Activated CD4-positive, alpha-beta memory T cell treated with anti-CD3 and anti-CD28 coated beads, Interleukin-2, amount 10 ng/mL, durations not matched to agents 7 days and 5 days (primary cell): ENCODE measurements at regions of chr22 and their contacts with region 1.

Region 1: DNA sequence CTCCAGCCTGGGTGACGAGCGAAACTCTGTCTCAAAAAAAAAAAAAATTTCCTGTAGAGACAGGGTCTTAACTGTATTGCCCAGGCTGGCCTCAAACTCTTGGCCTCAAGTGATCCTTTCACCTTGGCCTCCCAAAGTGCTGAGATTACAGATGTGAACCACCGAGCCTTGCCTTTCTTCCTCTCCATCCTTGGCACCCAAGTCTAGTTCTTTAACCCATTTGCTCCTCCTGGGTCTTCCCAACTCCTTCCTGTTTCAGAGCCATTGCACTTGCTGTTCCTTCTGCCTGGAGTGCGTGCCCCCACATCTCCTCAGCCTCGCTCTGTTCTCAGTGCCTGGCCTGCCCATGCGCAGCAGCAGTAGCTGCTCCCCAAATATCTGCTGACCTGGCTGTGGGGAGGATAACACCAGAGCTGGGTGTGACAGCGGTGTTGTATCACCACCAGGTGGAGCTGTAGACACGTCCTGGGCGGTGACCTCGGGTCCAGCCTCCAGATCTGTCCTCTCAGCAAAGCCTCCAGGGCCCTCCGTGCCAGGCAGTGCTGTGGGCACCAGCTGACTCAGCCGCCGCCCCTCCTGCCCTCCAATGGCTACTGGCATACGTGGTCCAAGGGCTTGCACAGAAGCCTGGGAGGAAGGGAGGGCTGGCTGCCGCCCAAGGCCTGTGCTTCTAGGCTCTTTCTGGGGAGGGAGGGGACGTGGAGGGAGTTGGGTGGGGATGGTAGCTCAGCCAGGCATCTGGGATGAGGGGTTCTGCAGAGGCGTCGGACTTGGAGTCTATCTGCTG is 22.0 kb downstream of the TEF start:
- DNase-seq: peak; percentile 90
- H3K4me3 Mint-ChIP-seq: no peak overlapping the region
- H3K27ac Mint-ChIP-seq: no peak overlapping the region
- H3K4me1 Mint-ChIP-seq: peaks cover 10% of the 10 kb centered on the region
- H3K27me3 Mint-ChIP-seq: no peaks in the 10 kb centered on the region

Region 2: DNA sequence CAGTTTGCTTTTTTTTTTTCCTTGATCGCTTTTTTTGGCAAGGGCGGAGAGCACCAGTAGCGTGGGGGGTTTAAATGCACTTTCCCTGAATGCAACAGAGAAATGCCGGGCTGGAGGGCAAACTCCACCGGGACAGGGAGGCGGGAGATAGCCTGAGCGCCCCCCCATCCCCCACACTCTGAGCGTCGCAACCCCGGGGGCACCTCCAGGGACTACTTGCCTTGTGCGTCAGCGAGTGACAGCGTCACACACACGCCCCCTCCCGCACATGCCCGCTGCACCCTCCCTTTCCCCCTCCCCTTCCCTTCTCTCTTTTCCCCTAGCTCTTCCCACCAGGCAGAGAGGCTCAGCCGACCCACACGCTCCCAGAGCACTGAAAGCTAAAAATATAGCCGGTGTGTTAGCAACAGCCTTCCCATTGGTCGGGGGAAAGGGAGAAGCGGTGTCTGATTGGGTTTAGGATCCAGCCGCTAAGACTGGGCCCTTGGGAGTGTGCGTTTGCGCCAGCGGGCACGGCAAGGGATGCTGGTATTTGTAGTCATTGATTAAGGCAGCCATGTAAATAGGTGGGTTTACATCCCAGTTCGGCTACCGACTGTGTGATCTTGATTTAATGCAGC is 44.6 kb after region 1 on chr22:
- CTCF ChIA-PET with region 1: interaction called, 13 read pairs
- POLR2A ChIA-PET with region 1: interaction called, 27 read pairs
- DNase-seq: peak; percentile 94
- H3K4me3 Mint-ChIP-seq: peak overlapping the region; percentile 95
- H3K27ac Mint-ChIP-seq: peak overlapping the region; percentile 93
- H3K4me1 Mint-ChIP-seq: peaks cover 22% of the 10 kb centered on the region
- H3K27me3 Mint-ChIP-seq: no peaks in the 10 kb centered on the region

Region 3: DNA sequence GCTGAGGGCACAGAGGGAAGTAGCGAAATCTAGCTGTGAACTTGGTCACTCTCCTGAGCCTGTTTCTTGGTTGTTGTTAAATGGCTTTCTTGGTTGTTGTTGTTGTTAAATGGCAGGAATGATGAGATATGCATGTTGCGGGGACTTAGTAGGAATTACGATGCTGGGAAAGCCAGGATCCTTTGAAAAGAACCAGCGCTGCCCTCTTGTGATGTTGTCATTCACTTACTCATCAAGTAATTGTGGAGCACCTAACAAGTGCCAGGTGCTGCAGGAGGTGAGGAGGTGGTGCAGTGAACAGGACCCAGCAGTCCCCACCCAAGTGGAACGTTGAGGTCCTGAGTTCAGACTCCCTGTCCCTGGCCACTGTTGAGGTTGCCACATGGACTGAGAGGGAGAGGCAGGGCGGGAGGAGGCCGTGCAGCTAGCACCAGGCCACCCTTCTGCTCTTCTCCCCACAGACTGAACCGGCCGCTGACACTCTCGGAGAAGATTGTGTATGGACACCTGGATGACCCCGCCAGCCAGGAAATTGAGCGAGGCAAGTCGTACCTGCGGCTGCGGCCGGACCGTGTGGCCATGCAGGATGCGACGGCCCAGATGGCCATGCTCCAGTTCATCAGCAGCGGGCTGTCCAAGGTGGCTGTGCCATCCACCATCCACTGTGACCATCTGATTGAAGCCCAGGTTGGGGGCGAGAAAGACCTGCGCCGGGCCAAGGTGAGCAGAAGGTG is 103.8 kb after region 1 on chr22:
- CTCF ChIA-PET with region 1: interaction called, 42 read pairs
- POLR2A ChIA-PET with region 1: no interaction called
- DNase-seq: no peak
- H3K4me3 Mint-ChIP-seq: no peak overlapping the region
- H3K27ac Mint-ChIP-seq: no peak overlapping the region
- H3K4me1 Mint-ChIP-seq: no peaks in the 10 kb centered on the region
- H3K27me3 Mint-ChIP-seq: no peaks in the 10 kb centered on the region

Region 4: GRCh38 chr22:41526837-41527799 is 123.4 kb after region 1 on chr22:
- CTCF ChIA-PET with region 1: interaction called, 78 read pairs
- POLR2A ChIA-PET with region 1: interaction called, 6 read pairs
- DNase-seq: peak; percentile 69
- H3K4me3 Mint-ChIP-seq: no peak overlapping the region
- H3K27ac Mint-ChIP-seq: peak overlapping the region; percentile 49
- H3K4me1 Mint-ChIP-seq: peaks cover 13% of the 10 kb centered on the region
- H3K27me3 Mint-ChIP-seq: no peaks in the 10 kb centered on the region

Region 5: GRCh38 chr22:41582694-41583093 is 179.0 kb after region 1 on chr22:
- CTCF ChIA-PET with region 1: no interaction called
- POLR2A ChIA-PET with region 1: no interaction called
- DNase-seq: no peak
- H3K4me3 Mint-ChIP-seq: no peak overlapping the region
- H3K27ac Mint-ChIP-seq: no peak overlapping the region
- H3K4me1 Mint-ChIP-seq: peaks cover 10% of the 10 kb centered on the region
- H3K27me3 Mint-ChIP-seq: no peaks in the 10 kb centered on the region